ENCODE measurements at regions of chrX and their contacts with region 1.

Region 1: GRCh38 chrX:71910986-71911730 is 513 bp downstream of the NHSL2 start:
- DNase-seq: peak; percentile 32 to 68 (median 55)
- ATAC-seq: peak; percentile 68 to 70
- H3K4me3 ChIP-seq: peak overlapping the region; percentile 65
- H3K27ac ChIP-seq: no peak overlapping the region
- H3K4me1 ChIP-seq: no peaks in the 10 kb centered on the region
- H3K27me3 ChIP-seq: no peaks in the 10 kb centered on the region

Region 2: DNA sequence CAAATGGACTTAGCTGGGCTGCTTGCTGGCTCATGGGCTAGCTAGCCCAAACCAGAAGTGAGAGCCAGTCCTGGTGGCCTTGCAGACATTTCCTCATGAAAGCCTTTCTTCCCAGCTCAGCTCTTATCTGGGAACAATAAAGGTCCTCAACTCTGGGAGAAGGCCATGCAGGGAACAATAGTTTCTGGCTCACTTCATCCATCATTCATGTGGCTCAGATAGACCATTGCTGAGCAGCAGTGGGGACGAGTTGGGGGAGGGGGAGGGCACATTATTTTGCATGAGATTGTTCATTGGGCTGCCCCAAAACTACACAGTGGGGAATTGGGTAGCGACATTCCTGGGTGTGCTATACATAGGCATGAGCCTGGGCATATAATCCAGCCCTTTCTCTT is 47.1 kb after region 1 on chrX:
- intact Hi-C with region 1: no loop called
- DNase-seq: no peak
- ATAC-seq: peak in 1 of 2 donors; percentile 66
- H3K4me3 ChIP-seq: no peak overlapping the region
- H3K27ac ChIP-seq: no peak overlapping the region
- H3K4me1 ChIP-seq: peaks cover 3% of the 10 kb centered on the region
- H3K27me3 ChIP-seq: no peaks in the 10 kb centered on the region

Region 3: GRCh38 chrX:71998836-71999509 is 87.8 kb after region 1 on chrX:
- intact Hi-C with region 1: loop called in 1 of 4 experiments (anchors 10 kb)
- DNase-seq: no peak
- ATAC-seq: no peak
- H3K4me3 ChIP-seq: no peak overlapping the region
- H3K27ac ChIP-seq: no peak overlapping the region
- H3K4me1 ChIP-seq: peaks cover 4% of the 10 kb centered on the region
- H3K27me3 ChIP-seq: no peaks in the 10 kb centered on the region

Region 4: GRCh38 chrX:72159769-72160168 is 248.6 kb after region 1 on chrX:
- intact Hi-C with region 1: no loop called
- DNase-seq: no peak
- ATAC-seq: no peak
- H3K4me3 ChIP-seq: no peak overlapping the region
- H3K27ac ChIP-seq: no peak overlapping the region
- H3K4me1 ChIP-seq: no peaks in the 10 kb centered on the region
- H3K27me3 ChIP-seq: no peaks in the 10 kb centered on the region

Region 5: GRCh38 chrX:72430405-72430968 is 519.3 kb after region 1 on chrX:
- intact Hi-C with region 1: no loop called
- DNase-seq: no peak
- ATAC-seq: peak in 1 of 2 donors; percentile 35
- H3K4me3 ChIP-seq: no peak overlapping the region
- H3K27ac ChIP-seq: no peak overlapping the region
- H3K4me1 ChIP-seq: peaks cover 3% of the 10 kb centered on the region
- H3K27me3 ChIP-seq: no peaks in the 10 kb centered on the region

Measured in right cardiac atrium (tissue), 5 donors.